BJ (cell line): ENCODE measurements at regions of chr4 and their contacts with region 1.

Region 1: GRCh38 chr4:173318648-173319211 is 15.4 kb downstream of the HMGB2 start:
- DNase-seq: no peak
- H3K4me3 ChIP-seq: no peak overlapping the region
- H3K27me3 ChIP-seq: no peaks in the 10 kb centered on the region
- CTCF ChIP-seq: no peak

Region 2: GRCh38 chr4:173334085-173334772 is 15.5 kb after region 1 on chr4 and contains the start of gene HMGB2:
- CTCF ChIA-PET with region 1: interaction called, 20 read pairs
- POLR2A ChIA-PET with region 1: no interaction called
- DNase-seq: peak; percentile 100
- H3K4me3 ChIP-seq: peak within 1 kb of the TSS; percentile 100
- H3K27me3 ChIP-seq: no peaks in the 10 kb centered on the region
- CTCF ChIP-seq: no peak
- polyA plus RNA-seq, gene HMGB2: 32.7 and 68.5 TPM in 2 replicates

Region 3: GRCh38 chr4:173360587-173361221 is 42.0 kb after region 1 on chr4:
- CTCF ChIA-PET with region 1: interaction called, 11 read pairs
- POLR2A ChIA-PET with region 1: no interaction called
- DNase-seq: no peak
- H3K4me3 ChIP-seq: no peak overlapping the region
- H3K27me3 ChIP-seq: peaks cover 2% of the 10 kb centered on the region; the same call in 1 of the 2 replicates
- CTCF ChIP-seq: peak; percentile 46

Region 4: DNA sequence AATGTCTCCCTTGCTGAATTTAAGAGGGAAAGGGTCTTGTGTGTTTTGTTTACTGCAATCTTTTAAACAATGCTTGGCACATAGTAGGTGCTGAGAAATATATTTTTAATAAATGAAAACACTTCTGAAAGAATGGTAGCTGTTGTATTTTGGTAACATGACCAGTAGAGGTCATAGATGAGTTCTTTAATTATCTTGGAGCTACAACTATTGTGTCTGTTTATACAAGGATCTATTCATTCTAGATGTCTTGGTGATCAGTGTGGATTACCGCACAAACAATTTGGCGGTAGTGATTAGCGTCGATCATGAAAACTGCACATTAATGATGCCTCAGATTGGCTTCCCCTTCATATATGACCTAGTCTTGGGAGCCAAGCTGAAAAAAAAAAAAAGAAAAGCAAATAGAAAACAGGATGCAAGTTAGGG is 101.6 kb after region 1 on chr4:
- CTCF ChIA-PET with region 1: interaction called, 186 read pairs
- POLR2A ChIA-PET with region 1: no interaction called
- DNase-seq: no peak
- H3K4me3 ChIP-seq: no peak overlapping the region
- H3K27me3 ChIP-seq: no peaks in the 10 kb centered on the region
- CTCF ChIP-seq: peak; percentile 38

Region 5: DNA sequence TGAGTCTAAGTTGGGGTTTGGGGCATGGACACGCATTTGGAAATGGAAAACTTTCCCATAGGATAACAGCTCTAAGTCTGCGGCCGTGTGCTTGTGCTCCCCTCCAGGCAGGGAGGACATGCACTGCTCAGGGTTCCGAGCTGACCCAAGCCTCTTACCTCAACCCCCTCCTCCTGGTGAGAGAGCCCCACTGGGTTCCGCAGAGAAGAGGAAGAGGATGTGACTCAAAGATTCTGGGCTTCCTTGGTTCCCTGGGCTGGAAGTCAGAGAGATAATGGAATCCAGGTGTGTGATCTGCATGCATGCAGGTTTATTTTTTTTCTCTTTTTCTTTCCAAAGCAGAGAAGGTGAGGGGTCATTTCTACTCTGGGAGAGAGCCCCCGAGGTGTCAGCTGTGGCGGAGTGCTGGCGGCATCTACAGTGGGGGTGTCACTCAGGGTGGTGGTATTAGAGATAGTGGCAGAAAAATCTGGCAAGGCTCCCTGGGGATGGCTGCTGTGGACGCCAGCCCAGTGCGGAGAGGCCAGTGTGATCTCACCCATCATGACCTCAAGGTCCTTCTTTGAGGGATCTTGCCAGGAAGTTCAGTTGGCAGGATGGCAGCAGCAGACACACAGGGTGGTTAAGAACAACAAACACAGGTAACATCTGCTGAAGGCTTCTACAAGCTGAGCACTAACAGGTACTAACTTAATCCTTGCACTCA is 380.0 kb after region 1 on chr4:
- CTCF ChIA-PET with region 1: no interaction called
- POLR2A ChIA-PET with region 1: no interaction called
- DNase-seq: no peak
- H3K4me3 ChIP-seq: no peak overlapping the region
- H3K27me3 ChIP-seq: no peaks in the 10 kb centered on the region
- CTCF ChIP-seq: no peak